Heart right ventricle (tissue), 16 donors: ENCODE measurements at regions of chr11 and their contacts with region 1.

Region 1: GRCh38 chr11:4672470-4672869 is 25.2 kb downstream of the OR51E2 start:
- DNase-seq: no peak
- ATAC-seq: no peak
- H3K4me3 ChIP-seq: no peak overlapping the region
- H3K27ac ChIP-seq: no peak overlapping the region
- H3K4me1 ChIP-seq: peaks cover 0 to 12% (median 0%) of the 10 kb centered on the region in 9 donors
- H3K27me3 ChIP-seq: no peaks in the 10 kb centered on the region
- CTCF ChIP-seq: no peak

Region 2: DNA sequence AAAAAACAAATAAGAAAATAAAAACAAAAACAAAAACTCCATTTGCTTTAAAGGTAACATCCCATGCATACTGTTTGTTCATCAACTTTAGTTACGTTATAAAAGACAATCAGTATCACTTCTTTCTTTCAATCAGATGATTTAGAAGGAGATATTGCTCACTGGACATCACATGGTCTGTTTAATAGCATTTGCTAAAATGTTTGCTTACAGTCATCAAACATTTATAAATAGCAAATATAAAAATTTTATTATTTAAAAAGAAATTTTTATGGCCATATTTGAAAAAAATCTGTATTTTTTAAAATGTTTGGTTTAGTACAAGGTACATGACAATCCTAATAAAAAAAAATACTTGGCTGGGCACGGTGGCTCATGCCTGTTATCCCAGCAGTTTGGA is 54.7 kb after region 1 on chr11:
- intact Hi-C with region 1: loop called in 1 of 10 experiments (anchors 10 kb)
- DNase-seq: no peak
- ATAC-seq: no peak
- H3K4me3 ChIP-seq: no peak overlapping the region
- H3K27ac ChIP-seq: no peak overlapping the region
- H3K4me1 ChIP-seq: no peaks in the 10 kb centered on the region
- H3K27me3 ChIP-seq: no peaks in the 10 kb centered on the region
- CTCF ChIP-seq: no peak

Region 3: DNA sequence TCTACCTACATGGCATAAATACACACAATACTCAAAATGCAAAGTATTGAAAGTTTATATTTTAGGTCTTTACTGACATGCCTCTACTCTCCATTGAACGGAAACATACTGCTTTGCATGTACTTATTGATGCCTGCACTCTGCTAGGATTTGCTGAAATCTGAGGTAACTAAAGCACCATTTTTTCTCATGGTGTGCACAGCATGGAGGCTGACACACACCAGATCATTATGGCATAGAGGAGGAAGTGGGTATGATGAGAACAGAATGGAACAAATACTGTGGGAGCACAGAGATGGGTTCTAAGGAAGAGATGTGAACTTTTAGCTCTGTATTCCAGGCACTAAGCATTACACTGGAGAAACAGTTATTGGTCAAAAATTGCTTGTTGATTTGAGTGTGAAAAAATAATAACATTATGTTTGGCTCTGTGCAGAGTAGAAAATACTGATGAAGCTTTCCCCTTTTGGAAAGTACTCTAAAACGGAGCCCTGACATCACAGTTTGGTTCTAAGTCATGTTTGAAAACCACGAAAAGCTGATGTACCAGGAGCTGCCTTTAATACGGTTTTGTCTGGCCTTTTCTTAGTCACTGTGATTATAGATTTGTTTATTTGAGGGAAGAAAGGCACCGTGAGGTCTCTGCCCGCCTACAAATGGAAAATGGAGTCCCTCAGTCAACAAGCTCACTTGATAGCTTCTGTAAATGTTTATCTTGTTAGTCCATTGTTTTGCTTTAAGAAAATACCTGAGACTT is 126.1 kb after region 1 on chr11:
- intact Hi-C with region 1: loop called in 1 of 10 experiments (anchors 1 kb)
- DNase-seq: no peak
- ATAC-seq: no peak
- H3K4me3 ChIP-seq: no peak overlapping the region
- H3K27ac ChIP-seq: no peak overlapping the region
- H3K4me1 ChIP-seq: no peaks in the 10 kb centered on the region
- H3K27me3 ChIP-seq: no peaks in the 10 kb centered on the region
- CTCF ChIP-seq: no peak